CD14-positive monocyte (primary cell): ENCODE measurements at regions of chr11 and their contacts with region 1.

Region 1: DNA sequence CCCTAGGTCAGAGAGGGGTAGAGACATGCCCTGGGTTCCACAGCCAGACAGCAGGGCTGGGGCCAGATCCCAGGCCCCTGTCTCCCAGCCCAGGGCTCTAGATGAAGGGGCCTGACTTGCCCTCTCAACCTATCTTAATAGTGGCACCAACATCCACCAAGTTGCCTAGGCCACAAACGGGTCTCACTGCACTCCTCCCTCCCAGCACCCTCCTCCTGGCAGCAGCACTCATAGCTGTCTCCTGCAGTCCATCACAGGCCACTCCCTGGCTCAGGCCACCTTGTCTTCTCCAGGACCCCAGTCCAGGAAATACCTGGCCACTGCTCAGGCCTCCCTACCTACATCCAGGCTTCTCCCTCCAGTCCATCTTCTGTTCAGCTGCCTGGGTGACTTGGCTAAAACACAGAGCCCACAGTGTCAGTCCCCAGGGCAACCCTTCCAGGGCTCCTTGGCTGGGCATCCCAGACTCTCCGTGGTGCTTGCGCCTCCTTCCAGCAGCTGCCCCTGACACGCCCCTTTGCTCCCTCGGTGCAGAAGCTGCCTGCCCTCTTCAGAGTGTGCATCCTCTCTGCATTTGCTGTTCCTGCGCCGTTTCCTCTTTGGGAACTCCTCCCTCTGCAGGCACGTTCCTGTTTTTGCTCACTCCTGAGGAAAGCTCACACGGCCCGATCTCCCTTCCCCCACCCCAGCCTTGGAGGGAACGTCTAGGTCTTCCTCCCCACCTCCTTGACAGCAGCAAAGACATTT is 40.5 kb downstream of the LRRC32 start:
- DNase-seq: peak; percentile 89 to 96 (median 95)
- H3K4me3 ChIP-seq: peak overlapping the region in 1 of 3 experiments; percentile 44
- H3K4me3 Mint-ChIP-seq: peak overlapping the region; percentile 70 to 88
- H3K27ac ChIP-seq: peak overlapping the region; percentile 96 to 100
- H3K27ac Mint-ChIP-seq: peak overlapping the region; percentile 99 to 100 (median 100)
- H3K4me1 ChIP-seq: peaks cover 47 to 53% of the 10 kb centered on the region in 2 donors
- H3K4me1 Mint-ChIP-seq: peaks cover 57% of the 10 kb centered on the region
- H3K27me3 ChIP-seq: peaks cover 0 to 3% of the 10 kb centered on the region in 2 donors
- H3K27me3 Mint-ChIP-seq: peaks cover 6 to 14% (median 13%) of the 10 kb centered on the region in 3 donors
- CTCF ChIP-seq: no peak

Region 2: GRCh38 chr11:76670485-76671236 is 40.6 kb after region 1 on chr11 and contains the start of gene LRRC32:
- intact Hi-C with region 1: loop called (anchors 2 to 5 kb)
- DNase-seq: peak; percentile 76 to 84 (median 81)
- H3K4me3 ChIP-seq: peak within 1 kb of the TSS in 2 of 3 experiments; percentile 0 to 65
- H3K4me3 Mint-ChIP-seq: peak within 1 kb of the TSS; percentile 73 to 83
- H3K27ac ChIP-seq: no peak within 1 kb of the TSS
- H3K27ac Mint-ChIP-seq: peak within 1 kb of the TSS in 6 of 7 donors; percentile 53 to 93 (median 77)
- H3K4me1 ChIP-seq: peaks cover 27 to 35% of the 10 kb centered on the region in 2 donors
- H3K4me1 Mint-ChIP-seq: peaks cover 35% of the 10 kb centered on the region
- H3K27me3 ChIP-seq: peaks cover 25 to 60% of the 10 kb centered on the region in 2 donors
- H3K27me3 Mint-ChIP-seq: peaks cover 44 to 80% (median 57%) of the 10 kb centered on the region in 3 donors
- CTCF ChIP-seq: no peak
- polyA plus RNA-seq, gene LRRC32: 1.5 TPM in 1 of 3 donors, not detected in the others